Astrocyte of the cerebellum (primary cell): ENCODE measurements at regions of chr14 and their contacts with region 1.

Region 1: GRCh38 chr14:103444837-103445524 is 59.8 kb downstream of the MARK3 start:
- DNase-seq: no peak
- H3K4me3 ChIP-seq: no peak overlapping the region
- CTCF ChIP-seq: no peak

Region 2: DNA sequence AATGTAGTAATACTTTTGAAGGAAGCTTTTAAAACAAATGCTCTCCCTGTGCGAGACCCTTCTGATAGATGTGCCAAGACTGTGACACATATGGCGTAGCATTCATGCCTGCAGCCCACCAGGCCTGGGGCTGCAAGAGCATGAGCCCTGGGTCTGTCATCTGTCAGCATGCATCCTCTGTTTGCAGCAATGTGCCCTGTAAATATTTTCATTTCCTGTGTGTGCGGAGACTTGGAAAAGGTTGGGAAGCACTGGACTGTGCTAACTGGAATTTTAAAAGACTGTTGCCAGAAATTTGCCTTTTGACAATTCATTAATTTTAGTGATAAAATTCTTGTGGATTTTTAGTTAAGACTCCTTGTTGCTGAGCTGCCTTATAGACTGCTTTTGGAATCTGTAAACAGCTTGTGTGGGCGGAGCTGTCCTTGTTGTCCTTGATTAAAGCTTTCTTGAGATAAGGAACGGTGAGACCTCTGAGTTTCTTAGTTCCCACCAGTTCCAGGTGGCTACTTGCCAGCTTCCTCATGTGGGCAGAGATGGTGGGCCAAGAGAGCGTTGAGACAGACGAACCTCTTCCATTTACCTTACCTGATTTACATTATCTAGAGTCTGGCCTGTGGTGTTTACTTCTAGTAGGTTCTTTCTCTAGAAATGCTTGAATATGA is 36.4 kb before region 1 on chr14:
- in situ Hi-C with region 1: loop called (anchors 5 kb)
- DNase-seq: no peak
- H3K4me3 ChIP-seq: no peak overlapping the region
- CTCF ChIP-seq: no peak

Region 3: DNA sequence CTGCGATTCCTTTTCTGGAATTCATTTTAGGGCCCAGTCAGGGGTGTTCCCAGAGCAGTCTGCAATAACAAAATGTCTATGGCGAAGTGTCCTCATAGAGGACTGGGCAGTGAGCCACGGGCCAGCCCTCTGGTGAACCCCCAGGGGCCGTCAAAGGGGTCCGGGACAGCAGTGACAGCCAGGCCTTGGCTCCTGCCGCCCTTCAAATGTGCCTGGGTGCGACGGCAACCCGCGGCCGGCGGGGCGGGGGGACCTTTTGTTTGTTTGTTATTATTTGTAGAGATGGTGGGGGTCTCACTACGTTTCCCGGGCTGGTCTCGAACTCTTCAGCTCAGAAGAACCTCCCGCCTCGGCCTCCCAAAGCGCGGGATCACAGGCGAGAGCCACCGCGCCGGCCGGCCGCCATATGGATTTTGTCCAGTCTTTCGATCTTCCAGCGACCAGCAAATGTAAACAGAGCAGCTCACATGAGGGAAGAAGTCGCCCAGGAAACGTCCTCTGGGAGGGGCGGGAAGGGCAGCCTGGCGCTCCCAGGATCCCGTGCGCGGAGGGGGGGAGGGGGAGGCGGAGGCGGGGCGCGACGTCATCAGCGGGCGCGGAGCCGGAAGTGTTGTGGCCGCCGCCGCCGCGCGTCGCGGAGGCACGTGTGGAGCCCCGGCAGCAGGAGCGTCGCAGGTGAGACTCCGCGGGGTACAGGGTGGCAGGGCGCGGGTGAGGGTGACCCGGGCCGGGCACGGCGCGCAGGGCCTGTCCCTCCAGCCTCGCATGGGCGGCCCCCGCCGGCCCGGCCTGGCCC is 83.8 kb after region 1 on chr14 and contains the start of gene TRMT61A:
- in situ Hi-C with region 1: no loop called
- DNase-seq: peak; percentile 74
- H3K4me3 ChIP-seq: peak within 1 kb of the TSS; percentile 93
- CTCF ChIP-seq: no peak